Naive thymus-derived CD4-positive, alpha-beta T cell (primary cell): ENCODE measurements at regions of chr22 and their contacts with region 1.

Region 1: GRCh38 chr22:22687638-22688500 is 43.5 kb downstream of the GGTLC2 start:
- DNase-seq: peak in 4 of 9 donors; percentile 20 to 32 (median 26)
- ATAC-seq: peak; percentile 64
- H3K4me3 ChIP-seq: no peak overlapping the region
- H3K4me3 Mint-ChIP-seq: no peak overlapping the region
- H3K27ac ChIP-seq: no peak overlapping the region
- H3K27ac Mint-ChIP-seq: peak overlapping the region in 1 of 9 donors; percentile 6
- H3K4me1 ChIP-seq: no peaks in the 10 kb centered on the region
- H3K4me1 Mint-ChIP-seq: peaks cover 0 to 3% (median 0%) of the 10 kb centered on the region in 7 donors
- H3K27me3 ChIP-seq: no peaks in the 10 kb centered on the region
- H3K27me3 Mint-ChIP-seq: no peaks in the 10 kb centered on the region

Region 2: DNA sequence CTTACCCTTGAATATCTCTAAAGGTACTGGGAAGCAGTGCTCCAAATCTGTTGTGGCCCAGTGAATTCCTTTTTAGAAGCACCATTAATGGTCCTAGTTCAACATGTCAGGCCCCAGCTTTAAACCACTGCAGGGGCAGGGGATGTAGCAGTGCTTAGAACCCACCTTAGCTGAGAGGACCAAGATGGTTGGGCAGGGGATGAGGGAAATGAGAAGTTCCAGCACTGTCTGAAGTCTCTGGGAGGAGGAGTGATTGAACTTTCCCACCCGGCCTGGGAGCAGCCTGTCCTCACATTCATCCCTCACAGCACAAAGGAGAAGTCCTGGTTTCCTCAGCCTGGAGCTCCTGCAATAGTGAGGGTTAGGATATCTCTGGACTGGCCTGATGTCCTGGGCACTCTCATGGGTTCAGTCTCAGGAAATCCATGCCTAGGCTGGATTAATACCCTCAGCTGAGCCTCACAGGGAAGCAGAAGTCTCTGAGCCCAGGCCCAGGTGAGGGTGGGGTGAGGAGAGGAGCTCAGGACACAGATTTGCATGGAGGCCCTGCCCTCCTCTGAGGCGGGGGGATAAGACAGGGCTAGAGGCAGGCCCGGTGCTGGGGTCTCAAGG is 100.2 kb before region 1 on chr22:
- CTCF ChIA-PET with region 1: no interaction called
- POLR2A ChIA-PET with region 1: no interaction called
- intact Hi-C with region 1: loop called in 1 of 2 experiments (anchors 2 kb)
- DNase-seq: no peak
- ATAC-seq: no peak
- H3K4me3 ChIP-seq: no peak overlapping the region
- H3K4me3 Mint-ChIP-seq: no peak overlapping the region
- H3K27ac ChIP-seq: no peak overlapping the region
- H3K27ac Mint-ChIP-seq: no peak overlapping the region
- H3K4me1 ChIP-seq: no peaks in the 10 kb centered on the region
- H3K4me1 Mint-ChIP-seq: peaks cover 0 to 1% (median 0%) of the 10 kb centered on the region in 7 donors
- H3K27me3 ChIP-seq: no peaks in the 10 kb centered on the region
- H3K27me3 Mint-ChIP-seq: peaks cover 15 to 41% (median 19%) of the 10 kb centered on the region in 5 donors

Region 3: GRCh38 chr22:22593964-22594656 is 93.8 kb before region 1 on chr22:
- CTCF ChIA-PET with region 1: no interaction called
- POLR2A ChIA-PET with region 1: no interaction called
- intact Hi-C with region 1: loop called (anchors 1 kb)
- DNase-seq: peak; percentile 23 to 53 (median 34)
- ATAC-seq: peak; percentile 81
- H3K4me3 ChIP-seq: no peak overlapping the region
- H3K4me3 Mint-ChIP-seq: no peak overlapping the region
- H3K27ac ChIP-seq: no peak overlapping the region
- H3K27ac Mint-ChIP-seq: no peak overlapping the region
- H3K4me1 ChIP-seq: no peaks in the 10 kb centered on the region
- H3K4me1 Mint-ChIP-seq: peaks cover 0 to 5% (median 0%) of the 10 kb centered on the region in 7 donors
- H3K27me3 ChIP-seq: no peaks in the 10 kb centered on the region
- H3K27me3 Mint-ChIP-seq: peaks cover 0 to 9% (median 6%) of the 10 kb centered on the region in 5 donors

Region 4: GRCh38 chr22:22655452-22656290 is 32.2 kb before region 1 on chr22:
- CTCF ChIA-PET with region 1: no interaction called
- POLR2A ChIA-PET with region 1: no interaction called
- intact Hi-C with region 1: no loop called
- DNase-seq: no peak
- ATAC-seq: no peak
- H3K4me3 ChIP-seq: no peak overlapping the region
- H3K4me3 Mint-ChIP-seq: peak overlapping the region in 1 of 10 donors; percentile 42
- H3K27ac ChIP-seq: no peak overlapping the region
- H3K27ac Mint-ChIP-seq: peak overlapping the region in 4 of 9 donors; percentile 11 to 65 (median 56)
- H3K4me1 ChIP-seq: no peaks in the 10 kb centered on the region
- H3K4me1 Mint-ChIP-seq: peaks cover 7 to 32% (median 22%) of the 10 kb centered on the region in 7 donors
- H3K27me3 ChIP-seq: no peaks in the 10 kb centered on the region
- H3K27me3 Mint-ChIP-seq: peaks cover 0 to 21% (median 0%) of the 10 kb centered on the region in 5 donors

Region 5: GRCh38 chr22:22748297-22748743 is 60.5 kb after region 1 on chr22:
- CTCF ChIA-PET with region 1: interaction called, 3 read pairs
- POLR2A ChIA-PET with region 1: no interaction called
- intact Hi-C with region 1: loop called in 1 of 2 experiments (anchors 1 kb)
- DNase-seq: peak in 6 of 9 donors; percentile 17 to 34 (median 26)
- ATAC-seq: peak; percentile 78
- H3K4me3 ChIP-seq: no peak overlapping the region
- H3K4me3 Mint-ChIP-seq: no peak overlapping the region
- H3K27ac ChIP-seq: no peak overlapping the region
- H3K27ac Mint-ChIP-seq: peak overlapping the region in 2 of 9 donors; percentile 21 to 34
- H3K4me1 ChIP-seq: peaks cover 6 to 30% of the 10 kb centered on the region in 2 donors
- H3K4me1 Mint-ChIP-seq: peaks cover 2 to 23% (median 15%) of the 10 kb centered on the region in 7 donors
- H3K27me3 ChIP-seq: no peaks in the 10 kb centered on the region
- H3K27me3 Mint-ChIP-seq: peaks cover 0 to 19% (median 4%) of the 10 kb centered on the region in 5 donors